IMR-90 (cell line): ENCODE measurements at regions of chr1 and their contacts with region 1.

Region 1: GRCh38 chr1:207321079-207321789 is at the start of gene CD55:
- DNase-seq: peak; percentile 86
- ATAC-seq: peak; percentile 93
- H3K4me3 ChIP-seq: peak within 1 kb of the TSS; percentile 63
- H3K27ac ChIP-seq: peak within 1 kb of the TSS; percentile 28; the same call in 1 of the 2 replicates
- H3K4me1 ChIP-seq: peaks cover 2% of the 10 kb centered on the region; the same call in 1 of the 2 replicates
- H3K27me3 ChIP-seq: no peaks in the 10 kb centered on the region
- CTCF ChIP-seq: no peak; the same call in 1 of the 2 replicates
- POLR2A ChIP-seq: peak; percentile 90
- RAD21 ChIP-seq: no peak
- total RNA-seq, gene CD55: 6.6 and 9.7 TPM in 2 replicates

Region 2: GRCh38 chr1:207084701-207085180 is 236.5 kb before region 1 on chr1:
- CTCF ChIA-PET with region 1: no interaction called
- POLR2A ChIA-PET with region 1: no interaction called
- dilution Hi-C with region 1: no loop called
- in situ Hi-C with region 1: no loop called
- intact Hi-C with region 1: loop called (anchors 2 kb)
- DNase-seq: peak; percentile 61
- ATAC-seq: peak; percentile 80
- H3K4me3 ChIP-seq: no peak overlapping the region
- H3K27ac ChIP-seq: no peak overlapping the region
- H3K4me1 ChIP-seq: no peaks in the 10 kb centered on the region
- H3K27me3 ChIP-seq: peaks cover 14% of the 10 kb centered on the region
- CTCF ChIP-seq: peak; percentile 54
- POLR2A ChIP-seq: no peak
- RAD21 ChIP-seq: peak; percentile 57

Region 3: DNA sequence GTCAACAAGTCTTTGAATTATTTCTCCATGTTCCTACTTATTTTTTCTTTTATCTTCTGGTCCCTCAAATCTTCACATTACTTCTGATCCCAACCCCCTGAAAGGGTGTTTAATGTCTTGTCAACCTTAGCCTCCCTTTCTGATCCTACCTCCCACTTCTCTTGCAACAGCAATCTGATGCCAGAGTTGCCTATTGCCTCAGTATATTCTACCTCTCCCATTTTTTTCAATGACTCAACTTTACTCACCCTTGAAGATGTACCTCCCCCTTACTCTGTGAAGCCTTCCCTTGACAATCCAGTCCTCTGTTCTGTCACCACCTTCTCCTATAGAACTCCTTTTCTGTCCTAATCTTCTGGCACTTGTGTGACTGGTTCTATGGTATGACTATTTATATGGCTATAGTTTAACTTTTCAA is 99.3 kb before region 1 on chr1:
- CTCF ChIA-PET with region 1: no interaction called
- POLR2A ChIA-PET with region 1: no interaction called
- dilution Hi-C with region 1: no loop called
- in situ Hi-C with region 1: no loop called
- intact Hi-C with region 1: no loop called
- DNase-seq: peak; percentile 8
- ATAC-seq: no peak
- H3K4me3 ChIP-seq: no peak overlapping the region
- H3K27ac ChIP-seq: no peak overlapping the region
- H3K4me1 ChIP-seq: no peaks in the 10 kb centered on the region; the same call in 1 of the 2 replicates
- H3K27me3 ChIP-seq: no peaks in the 10 kb centered on the region
- CTCF ChIP-seq: no peak
- POLR2A ChIP-seq: no peak
- RAD21 ChIP-seq: no peak

Region 4: GRCh38 chr1:207251066-207251465 is 70.2 kb before region 1 on chr1:
- CTCF ChIA-PET with region 1: no interaction called
- POLR2A ChIA-PET with region 1: no interaction called
- dilution Hi-C with region 1: no loop called
- in situ Hi-C with region 1: no loop called
- intact Hi-C with region 1: no loop called
- DNase-seq: no peak
- ATAC-seq: no peak
- H3K4me3 ChIP-seq: no peak overlapping the region
- H3K27ac ChIP-seq: no peak overlapping the region
- H3K4me1 ChIP-seq: no peaks in the 10 kb centered on the region
- H3K27me3 ChIP-seq: no peaks in the 10 kb centered on the region
- CTCF ChIP-seq: no peak
- POLR2A ChIP-seq: no peak
- RAD21 ChIP-seq: no peak

Region 5: DNA sequence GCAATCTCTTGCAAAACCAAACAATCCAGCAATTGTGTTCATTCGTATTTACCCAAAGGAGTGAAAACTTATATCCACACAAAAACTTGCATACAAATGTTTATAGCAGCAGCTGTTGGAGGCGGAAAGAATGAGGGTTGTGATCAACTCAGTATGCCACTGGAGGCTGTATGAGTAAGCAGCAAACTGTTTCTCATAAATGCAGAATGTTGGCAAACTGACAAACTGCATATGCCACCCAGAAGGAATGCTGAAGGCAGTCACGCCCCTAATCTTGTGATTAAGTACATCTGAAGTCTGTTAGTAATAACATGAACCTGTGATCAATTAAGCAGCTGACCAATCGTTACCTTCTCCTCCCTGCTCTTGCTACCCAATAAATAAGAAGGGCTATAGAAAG is 72.4 kb after region 1 on chr1:
- CTCF ChIA-PET with region 1: interaction called, 3 read pairs
- POLR2A ChIA-PET with region 1: no interaction called
- dilution Hi-C with region 1: no loop called
- in situ Hi-C with region 1: no loop called
- intact Hi-C with region 1: loop called (anchors 2 kb)
- DNase-seq: peak; percentile 91
- ATAC-seq: peak; percentile 85
- H3K4me3 ChIP-seq: no peak overlapping the region
- H3K27ac ChIP-seq: no peak overlapping the region
- H3K4me1 ChIP-seq: peaks cover 2% of the 10 kb centered on the region; the same call in 1 of the 2 replicates
- H3K27me3 ChIP-seq: no peaks in the 10 kb centered on the region
- CTCF ChIP-seq: no peak
- POLR2A ChIP-seq: no peak
- RAD21 ChIP-seq: no peak